ENCODE measurements at regions of chr5 and their contacts with region 1.

Region 1: GRCh38 chr5:43120720-43121564 is at the start of gene ZNF131:
- DNase-seq: peak; percentile 92 to 99 (median 97)
- ATAC-seq: peak; percentile 84
- H3K4me3 ChIP-seq: peak within 1 kb of the TSS; percentile 91
- H3K4me3 Mint-ChIP-seq: peak within 1 kb of the TSS; percentile 97
- H3K27ac ChIP-seq: peak within 1 kb of the TSS; percentile 93 to 94
- H3K27ac Mint-ChIP-seq: peak within 1 kb of the TSS; percentile 94
- H3K4me1 ChIP-seq: peaks cover 30% of the 10 kb centered on the region
- H3K4me1 Mint-ChIP-seq: peaks cover 39% of the 10 kb centered on the region
- H3K27me3 ChIP-seq: no peaks in the 10 kb centered on the region
- H3K27me3 Mint-ChIP-seq: no peaks in the 10 kb centered on the region
- CTCF ChIP-seq: no peak
- total RNA-seq, gene ZNF131: 71.7 to 72.4 TPM

Region 2: DNA sequence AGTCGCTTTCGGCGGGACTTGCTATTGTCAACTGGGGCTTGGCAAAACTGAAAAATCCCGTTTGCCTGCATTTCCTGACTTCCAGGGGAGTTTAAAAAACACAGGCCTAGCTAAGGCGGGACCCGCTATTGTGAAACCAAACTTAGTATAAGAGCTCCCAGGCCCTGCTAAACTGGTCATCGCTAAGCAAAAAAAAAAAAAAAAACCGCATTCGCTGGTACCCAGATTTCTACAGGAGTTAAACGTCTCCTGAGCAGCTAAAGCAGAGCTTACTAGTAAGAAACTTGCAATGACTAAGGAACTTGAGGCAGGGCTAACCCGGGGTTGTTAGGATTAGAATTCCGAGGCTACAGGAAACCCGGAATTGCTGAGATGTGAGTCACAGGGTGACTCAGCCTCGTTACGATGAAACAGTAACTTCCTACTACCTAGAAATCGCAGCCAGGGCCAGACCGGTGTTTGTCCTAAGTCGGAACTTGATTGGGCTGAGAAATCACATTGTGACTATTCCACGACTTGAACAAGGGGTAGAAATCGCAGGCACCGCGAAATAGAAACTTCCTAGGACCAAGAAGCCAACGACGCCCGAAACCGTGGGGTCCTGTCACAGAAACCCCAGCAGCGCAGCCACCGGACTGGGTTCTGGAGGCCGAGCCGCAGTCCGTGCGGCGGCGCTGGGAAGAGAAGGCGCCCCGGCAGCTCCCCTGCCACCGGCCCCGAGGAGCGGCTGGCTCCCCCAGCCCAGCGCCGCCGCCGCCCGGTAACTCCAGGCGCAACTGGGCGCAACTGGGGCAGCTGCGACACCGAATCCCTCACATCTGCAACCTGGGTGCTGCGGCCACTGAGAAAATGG is 170.3 kb before region 1 on chr5:
- CTCF ChIA-PET with region 1: interaction called, 5 read pairs
- POLR2A ChIA-PET with region 1: interaction called, 62 read pairs
- intact Hi-C with region 1: loop called in 1 of 2 experiments (anchors 5 kb)
- DNase-seq: peak; percentile 35 to 90 (median 61)
- ATAC-seq: peak; percentile 41
- H3K4me3 ChIP-seq: peak overlapping the region; percentile 75
- H3K4me3 Mint-ChIP-seq: peak overlapping the region; percentile 98
- H3K27ac ChIP-seq: peak overlapping the region; percentile 96 to 98
- H3K27ac Mint-ChIP-seq: peak overlapping the region; percentile 99
- H3K4me1 ChIP-seq: peaks cover 45% of the 10 kb centered on the region
- H3K4me1 Mint-ChIP-seq: peaks cover 30% of the 10 kb centered on the region
- H3K27me3 ChIP-seq: no peaks in the 10 kb centered on the region
- H3K27me3 Mint-ChIP-seq: no peaks in the 10 kb centered on the region
- CTCF ChIP-seq: no peak

Region 3: DNA sequence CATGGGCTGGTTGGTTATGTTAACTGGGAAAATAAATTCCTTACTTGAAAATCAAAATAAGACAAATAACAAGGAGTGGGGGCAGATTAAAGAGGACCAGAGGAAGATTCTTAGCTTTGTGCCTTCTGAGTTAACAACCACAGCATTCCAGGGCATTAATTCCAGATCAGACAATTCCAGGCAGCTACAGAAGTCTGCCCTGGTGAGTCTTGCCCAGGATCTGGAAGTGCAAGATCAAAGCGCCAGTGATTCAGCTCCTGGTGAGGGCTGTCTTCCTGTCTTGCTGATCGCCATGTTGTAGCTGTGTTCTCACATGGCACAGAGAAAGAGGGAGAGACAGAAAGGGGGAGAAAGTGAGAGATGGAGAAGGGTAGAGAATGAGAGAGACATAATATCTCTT is 146.4 kb before region 1 on chr5:
- CTCF ChIA-PET with region 1: no interaction called
- POLR2A ChIA-PET with region 1: no interaction called
- intact Hi-C with region 1: no loop called
- DNase-seq: no peak
- ATAC-seq: no peak
- H3K4me3 ChIP-seq: no peak overlapping the region
- H3K4me3 Mint-ChIP-seq: no peak overlapping the region
- H3K27ac ChIP-seq: no peak overlapping the region
- H3K27ac Mint-ChIP-seq: no peak overlapping the region
- H3K4me1 ChIP-seq: no peaks in the 10 kb centered on the region
- H3K4me1 Mint-ChIP-seq: no peaks in the 10 kb centered on the region
- H3K27me3 ChIP-seq: no peaks in the 10 kb centered on the region
- H3K27me3 Mint-ChIP-seq: no peaks in the 10 kb centered on the region
- CTCF ChIP-seq: no peak

Region 4: GRCh38 chr5:43040287-43041098 is 80.4 kb before region 1 on chr5 and contains the start of gene ANXA2R:
- CTCF ChIA-PET with region 1: interaction called, 8 read pairs
- POLR2A ChIA-PET with region 1: interaction called, 182 read pairs
- intact Hi-C with region 1: no loop called
- DNase-seq: peak; percentile 90 to 98 (median 93)
- ATAC-seq: peak; percentile 53
- H3K4me3 ChIP-seq: peak within 1 kb of the TSS; percentile 84
- H3K4me3 Mint-ChIP-seq: peak within 1 kb of the TSS; percentile 98
- H3K27ac ChIP-seq: peak within 1 kb of the TSS; percentile 96 to 98
- H3K27ac Mint-ChIP-seq: peak within 1 kb of the TSS; percentile 98
- H3K4me1 ChIP-seq: peaks cover 73% of the 10 kb centered on the region
- H3K4me1 Mint-ChIP-seq: peaks cover 46% of the 10 kb centered on the region
- H3K27me3 ChIP-seq: no peaks in the 10 kb centered on the region
- H3K27me3 Mint-ChIP-seq: no peaks in the 10 kb centered on the region
- CTCF ChIP-seq: peak; percentile 86
- total RNA-seq, gene ANXA2R: 45.6 to 48.9 TPM

Region 5: DNA sequence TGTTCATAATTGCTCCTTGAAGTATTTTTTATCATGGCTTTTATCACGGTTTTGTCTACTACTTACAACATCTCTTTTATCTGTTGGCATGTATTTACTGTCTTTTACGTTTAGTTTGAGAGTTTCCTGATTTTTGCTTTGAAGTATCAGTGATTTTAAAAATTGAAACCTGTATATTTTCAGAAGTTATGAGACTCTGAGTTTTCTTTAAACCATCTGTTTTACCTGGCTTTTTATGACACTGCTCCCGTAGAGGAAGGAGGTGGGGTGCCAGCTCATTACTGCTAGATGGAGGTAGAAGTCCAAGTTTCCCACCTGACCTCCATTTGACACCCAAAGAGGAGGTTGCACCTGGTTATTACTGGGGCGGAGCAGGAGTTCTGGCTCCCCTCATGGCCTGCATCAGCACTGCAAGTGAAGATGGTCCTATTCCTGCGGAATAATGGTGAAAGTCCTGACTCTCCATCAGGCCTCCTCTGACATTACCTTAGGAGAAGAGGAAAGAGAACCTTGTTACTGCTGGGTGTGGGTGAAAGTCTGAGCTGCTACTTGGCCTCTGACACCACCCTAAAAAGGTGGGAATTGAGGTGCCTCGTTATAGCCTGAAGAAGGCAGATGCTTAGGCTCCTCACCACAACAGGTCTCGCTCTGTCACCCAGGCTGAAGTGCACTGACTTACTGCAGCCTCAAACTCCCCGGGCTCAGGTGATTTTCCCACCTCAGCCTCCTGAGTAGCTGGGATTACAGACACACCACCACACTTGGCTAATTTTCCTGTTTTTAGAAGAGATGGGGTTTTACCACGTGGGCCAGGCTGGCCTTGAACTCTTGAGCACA is 10.1 kb before region 1 on chr5:
- CTCF ChIA-PET with region 1: interaction called, 49 read pairs
- POLR2A ChIA-PET with region 1: interaction called, 209 read pairs
- intact Hi-C with region 1: no loop called
- DNase-seq: peak in 11 of 14 experiments; percentile 11 to 72 (median 29)
- ATAC-seq: peak; percentile 87
- H3K4me3 ChIP-seq: no peak overlapping the region
- H3K4me3 Mint-ChIP-seq: peak overlapping the region; percentile 44
- H3K27ac ChIP-seq: peak overlapping the region in 1 of 2 donors; percentile 11
- H3K27ac Mint-ChIP-seq: peak overlapping the region; percentile 74
- H3K4me1 ChIP-seq: peaks cover 25% of the 10 kb centered on the region
- H3K4me1 Mint-ChIP-seq: peaks cover 30% of the 10 kb centered on the region
- H3K27me3 ChIP-seq: no peaks in the 10 kb centered on the region
- H3K27me3 Mint-ChIP-seq: no peaks in the 10 kb centered on the region
- CTCF ChIP-seq: peak; percentile 67

Region 6: GRCh38 chr5:43279548-43280274 is 158.8 kb after region 1 on chr5:
- CTCF ChIA-PET with region 1: no interaction called
- POLR2A ChIA-PET with region 1: no interaction called
- intact Hi-C with region 1: no loop called
- DNase-seq: no peak
- ATAC-seq: no peak
- H3K4me3 ChIP-seq: no peak overlapping the region
- H3K4me3 Mint-ChIP-seq: no peak overlapping the region
- H3K27ac ChIP-seq: no peak overlapping the region
- H3K27ac Mint-ChIP-seq: no peak overlapping the region
- H3K4me1 ChIP-seq: no peaks in the 10 kb centered on the region
- H3K4me1 Mint-ChIP-seq: no peaks in the 10 kb centered on the region
- H3K27me3 ChIP-seq: no peaks in the 10 kb centered on the region
- H3K27me3 Mint-ChIP-seq: no peaks in the 10 kb centered on the region
- CTCF ChIP-seq: no peak

Region 7: DNA sequence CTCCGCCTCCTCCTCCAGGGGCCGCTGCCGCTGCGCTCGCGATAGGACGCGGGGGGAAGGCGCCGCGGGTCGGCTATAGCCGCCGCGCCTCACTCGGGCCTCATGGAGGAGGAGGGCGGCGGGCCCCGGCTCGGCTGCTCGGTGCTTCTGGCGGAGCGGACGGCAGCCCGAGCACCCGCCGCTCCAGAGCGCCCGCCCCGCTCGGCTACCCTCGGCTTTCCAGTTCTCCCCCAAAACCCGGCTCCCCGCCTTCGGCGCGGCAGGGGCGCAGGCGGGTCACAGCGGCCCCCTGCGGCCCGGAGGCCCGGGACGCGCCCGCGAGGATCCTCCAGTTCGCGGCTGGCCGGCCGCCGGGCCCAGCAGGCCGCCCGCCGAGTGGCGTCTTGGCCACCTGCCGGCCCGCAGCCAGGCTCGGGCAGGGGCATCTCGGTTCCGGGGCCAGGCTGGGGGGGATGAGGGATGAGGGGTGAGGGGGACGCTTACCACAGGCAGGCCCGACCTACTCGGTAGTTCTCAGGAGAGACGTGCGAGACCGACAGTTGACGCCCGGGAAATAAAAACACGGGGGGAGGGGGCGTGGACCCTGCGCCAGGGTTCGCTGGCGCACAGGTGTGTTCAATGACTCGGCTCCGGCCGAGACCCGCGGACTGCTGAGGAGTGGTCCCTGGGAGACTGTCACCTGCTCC is 436.1 kb after region 1 on chr5 and contains the start of gene PAIP1:
- CTCF ChIA-PET with region 1: no interaction called
- POLR2A ChIA-PET with region 1: interaction called, 5 read pairs
- intact Hi-C with region 1: loop called in 1 of 2 experiments (anchors 10 kb)
- DNase-seq: peak; percentile 65 to 93 (median 78)
- ATAC-seq: peak; percentile 82
- H3K4me3 ChIP-seq: peak within 1 kb of the TSS; percentile 96
- H3K4me3 Mint-ChIP-seq: peak within 1 kb of the TSS; percentile 97
- H3K27ac ChIP-seq: peak within 1 kb of the TSS; percentile 85 to 89
- H3K27ac Mint-ChIP-seq: peak within 1 kb of the TSS; percentile 94
- H3K4me1 ChIP-seq: peaks cover 27% of the 10 kb centered on the region
- H3K4me1 Mint-ChIP-seq: peaks cover 6% of the 10 kb centered on the region
- H3K27me3 ChIP-seq: no peaks in the 10 kb centered on the region
- H3K27me3 Mint-ChIP-seq: peaks cover 11% of the 10 kb centered on the region
- CTCF ChIP-seq: peak; percentile 59
- total RNA-seq, gene PAIP1: 33.9 to 35.1 TPM